GM13976 (cell line): ENCODE measurements at regions of chr6 and their contacts with region 1.

Region 1: DNA sequence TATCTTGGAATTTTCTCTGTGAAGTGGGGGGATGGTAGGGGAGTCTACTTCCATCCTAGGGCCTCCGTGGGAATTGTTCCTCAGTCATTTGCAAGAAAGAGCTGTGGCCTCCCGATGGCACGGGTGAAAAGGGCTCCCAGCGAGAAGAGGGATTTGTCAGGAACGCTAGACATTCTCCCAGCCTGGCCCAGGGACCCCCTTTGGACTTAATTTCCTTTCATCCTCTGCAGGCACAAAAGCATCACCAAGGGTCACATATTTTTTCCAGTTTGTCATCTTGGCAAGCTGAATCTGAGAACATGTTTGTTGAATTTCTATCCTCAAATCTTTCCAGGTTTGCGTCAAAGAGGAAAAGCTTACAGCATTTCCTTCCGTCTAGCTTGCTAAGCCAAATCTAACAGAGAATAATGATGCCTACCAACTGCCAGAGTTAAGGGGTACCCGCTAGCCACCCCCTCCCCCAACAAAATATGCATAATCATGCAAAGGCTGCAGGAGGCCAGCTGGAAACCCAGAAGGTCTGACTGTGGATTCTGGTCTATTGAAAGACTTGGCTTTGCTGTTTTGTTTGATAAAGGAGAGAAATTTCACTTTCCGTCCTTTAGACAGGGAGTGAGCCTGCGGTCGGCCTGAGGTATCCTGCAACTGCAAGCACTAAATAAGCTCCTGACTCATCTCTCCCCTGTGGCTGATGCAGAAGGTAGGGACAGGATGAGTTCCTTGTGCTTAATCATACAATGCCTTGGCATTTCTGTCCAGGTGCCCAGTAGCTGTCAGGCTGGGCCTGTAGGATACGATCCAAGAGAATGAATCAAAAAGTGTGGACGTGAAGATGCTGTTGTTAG is 23.1 kb downstream of the PSMG4 start:
- DNase-seq: no peak
- CTCF ChIP-seq: no peak

Region 2: DNA sequence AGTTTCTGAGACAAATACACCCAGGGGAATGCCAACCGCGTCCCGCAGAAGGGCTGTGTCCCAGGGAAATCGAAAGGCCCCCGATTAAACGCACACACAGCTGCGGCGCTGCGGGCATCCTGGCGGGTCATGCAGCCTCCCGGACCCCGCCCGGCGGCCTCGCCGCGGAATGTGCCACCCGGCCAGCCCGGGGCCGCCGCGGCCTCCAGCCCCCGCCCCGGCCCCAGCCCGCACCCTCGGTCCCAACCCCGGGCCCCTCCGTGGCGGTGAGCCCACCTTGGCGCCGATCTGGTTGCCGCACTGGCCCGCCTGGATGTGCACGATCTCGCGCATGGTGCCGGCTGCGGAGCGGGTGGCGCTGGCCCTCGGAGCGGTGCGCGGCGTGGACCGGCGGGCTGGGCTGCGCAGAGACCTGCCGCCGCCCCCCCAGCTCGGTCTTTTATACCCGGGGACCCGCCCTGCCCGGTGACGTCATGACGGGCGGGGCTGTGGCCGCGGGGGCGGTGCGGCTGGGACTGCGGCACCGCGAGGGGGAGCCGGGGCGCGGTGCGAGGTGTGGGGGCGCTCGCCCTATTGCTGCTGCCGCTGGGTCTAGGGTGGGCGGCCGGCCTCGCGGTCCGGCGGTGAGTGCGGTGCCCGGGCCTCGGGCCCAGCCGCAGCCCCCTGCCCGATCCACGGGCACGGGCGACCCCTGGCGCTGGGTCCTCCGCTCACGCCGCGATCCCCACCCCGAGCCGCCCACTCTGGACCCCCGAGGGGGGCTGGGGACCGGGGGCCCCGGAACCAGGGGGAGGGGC is 124.5 kb before region 1 on chr6 and contains the start of gene TUBB2A:
- in situ Hi-C with region 1: no loop called
- DNase-seq: peak; percentile 97
- CTCF ChIP-seq: peak; percentile 38

Region 3: DNA sequence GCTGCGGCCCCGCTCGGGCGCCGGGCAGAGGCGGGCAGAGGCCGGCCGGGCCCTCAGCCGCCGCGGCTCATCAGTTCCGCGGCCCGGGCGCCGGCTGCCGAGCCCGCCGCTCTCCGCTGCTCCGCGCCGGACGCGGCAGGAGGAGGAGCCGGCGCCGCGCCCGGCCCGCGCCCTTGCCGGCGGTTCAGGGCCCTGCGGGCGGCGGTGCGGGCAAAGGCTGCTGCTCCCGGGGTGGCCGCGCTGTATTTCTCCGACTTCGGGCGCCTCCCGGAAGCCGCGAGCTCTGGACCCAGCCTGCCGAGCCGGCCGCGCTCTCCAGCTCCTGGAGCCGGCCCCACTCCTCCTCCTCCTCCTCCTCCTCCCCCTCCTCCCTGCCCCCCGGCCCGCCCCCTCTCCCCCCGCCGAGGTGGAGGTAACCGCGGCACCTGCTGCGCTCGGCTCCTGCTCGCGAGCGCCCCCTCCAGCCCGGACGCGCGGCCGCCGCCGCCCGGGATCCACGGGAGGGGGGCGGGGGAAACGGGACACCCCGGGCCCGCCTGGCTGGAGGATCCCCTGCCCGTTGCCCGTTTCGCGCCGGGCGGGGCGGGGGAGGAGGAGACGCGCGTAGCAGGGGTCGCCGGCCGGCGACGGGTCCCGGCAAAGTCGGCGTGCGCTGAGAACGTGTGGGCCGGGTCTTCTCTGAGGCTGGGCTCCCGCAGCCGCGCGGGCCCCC is 175.1 kb after region 1 on chr6 and contains the start of gene SLC22A23:
- in situ Hi-C with region 1: loop called (anchors 25 kb)
- DNase-seq: peak; percentile 92
- CTCF ChIP-seq: peak; percentile 89

Region 4: GRCh38 chr6:3566812-3567211 is 285.0 kb after region 1 on chr6:
- in situ Hi-C with region 1: no loop called
- DNase-seq: no peak
- CTCF ChIP-seq: no peak

Region 5: DNA sequence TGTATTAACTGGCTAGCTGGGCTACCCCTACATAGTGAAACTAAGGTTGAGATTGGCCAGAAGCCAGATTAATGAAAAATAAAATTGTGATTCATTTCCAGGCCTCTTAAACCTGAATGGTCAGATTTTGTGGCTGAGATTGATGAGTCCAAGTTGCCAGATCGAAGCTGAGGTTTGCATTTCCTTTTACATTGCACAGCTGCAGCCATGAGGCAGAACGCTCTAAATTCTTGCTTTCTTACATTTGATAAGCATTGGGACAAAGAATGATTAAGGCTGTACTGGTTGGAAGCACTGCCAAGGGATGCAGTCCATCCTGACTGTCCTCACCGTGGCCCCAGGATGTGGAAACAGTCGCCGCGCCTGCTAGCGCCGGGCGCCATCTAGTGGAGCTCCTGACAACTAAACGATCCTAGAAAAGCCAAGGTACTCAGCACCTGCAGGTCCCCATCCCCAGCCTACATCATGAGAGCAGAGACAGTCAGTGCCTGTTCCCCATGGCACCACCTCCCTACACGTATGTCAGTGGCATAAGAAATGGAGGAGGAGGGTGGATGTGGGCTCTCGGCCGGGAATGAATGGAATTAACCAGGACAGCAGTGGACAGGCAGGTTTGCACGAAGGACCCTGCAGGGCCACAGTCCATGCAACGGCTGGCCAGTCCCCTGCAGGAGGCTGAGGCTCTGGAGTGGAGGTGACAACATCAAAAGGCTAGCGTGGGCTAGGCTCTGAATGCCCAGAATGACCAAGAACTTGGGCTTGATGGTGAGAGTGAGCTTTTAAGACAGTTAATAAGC is 450.7 kb after region 1 on chr6:
- in situ Hi-C with region 1: loop called (anchors 5 kb)
- DNase-seq: peak; percentile 79
- CTCF ChIP-seq: peak; percentile 86

Region 6: DNA sequence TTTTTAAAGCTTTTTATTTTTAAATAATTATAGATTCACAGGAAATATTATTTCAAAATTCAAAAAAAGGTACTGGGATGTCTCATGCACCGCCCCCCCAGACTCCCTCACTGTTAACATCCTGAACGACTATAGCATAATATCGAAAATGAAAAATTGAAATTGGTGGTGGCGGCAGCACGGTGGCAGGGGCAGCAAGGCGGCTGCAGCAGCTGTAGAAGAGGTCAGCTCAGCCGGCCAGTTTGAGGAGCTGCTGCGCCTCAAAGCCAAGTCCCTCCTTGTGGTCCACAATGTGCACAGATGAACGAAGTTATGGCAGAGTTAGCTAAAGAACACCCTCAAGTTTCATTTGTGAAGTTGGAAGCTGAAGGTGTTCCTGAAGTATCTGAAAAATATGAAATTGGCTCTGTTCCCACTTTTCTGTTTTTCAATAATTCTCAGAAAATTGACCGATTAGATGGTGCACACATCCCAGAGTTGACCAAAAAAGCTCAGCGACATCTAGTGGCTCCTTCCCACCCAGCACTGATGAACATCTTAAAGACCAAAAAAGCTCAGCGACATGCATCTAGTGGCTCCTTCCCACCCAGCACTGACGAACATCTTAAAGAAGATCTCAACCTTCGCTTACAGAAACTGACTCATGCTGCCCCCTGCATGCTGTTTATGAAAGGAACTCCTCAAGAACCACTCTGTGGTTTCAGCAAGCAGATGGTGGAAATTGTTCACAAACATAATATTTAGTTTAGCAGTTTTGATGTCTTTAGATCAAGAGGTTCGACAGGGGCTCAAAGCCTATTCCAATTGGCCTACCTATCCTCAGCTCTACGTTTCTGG is 696.2 kb after region 1 on chr6:
- in situ Hi-C with region 1: loop called (anchors 25 kb)
- DNase-seq: peak; percentile 50
- CTCF ChIP-seq: peak; percentile 34